Transverse colon (tissue), 4 donors: ENCODE measurements at regions of chr17 and their contacts with region 1.

Region 1: DNA sequence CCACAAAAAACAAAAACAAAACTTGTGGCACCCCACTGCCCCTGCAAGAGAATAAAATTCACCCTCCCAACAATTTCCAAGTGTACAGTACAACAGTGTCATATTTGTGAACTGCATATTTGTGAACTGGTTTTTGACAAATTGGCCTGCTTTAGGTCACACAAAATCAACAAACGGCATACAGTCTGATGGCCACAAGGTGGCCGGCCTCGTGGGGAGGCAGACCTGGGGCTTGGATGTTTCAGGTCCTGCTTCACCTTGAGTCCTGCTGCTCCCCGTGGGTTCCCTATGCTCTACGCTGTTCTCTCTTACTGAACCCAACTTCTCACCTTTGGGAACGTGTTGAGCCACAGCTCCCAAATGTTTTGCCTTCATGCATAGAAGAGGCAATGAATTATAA is 102.2 kb downstream of the CDK5R1 start:
- DNase-seq: no peak
- H3K4me3 ChIP-seq: no peak overlapping the region
- H3K27ac ChIP-seq: no peak overlapping the region
- H3K4me1 ChIP-seq: no peaks in the 10 kb centered on the region
- H3K27me3 ChIP-seq: no peaks in the 10 kb centered on the region
- CTCF ChIP-seq: no peak
- EP300 ChIP-seq: no peak
- POLR2A ChIP-seq: no peak

Region 2: GRCh38 chr17:31147507-31148202 is 1441.3 kb before region 1 on chr17:
- in situ Hi-C with region 1: no loop called
- intact Hi-C with region 1: loop called (anchors 10 kb)
- DNase-seq: no peak
- H3K4me3 ChIP-seq: no peak overlapping the region
- H3K27ac ChIP-seq: no peak overlapping the region
- H3K4me1 ChIP-seq: no peaks in the 10 kb centered on the region
- H3K27me3 ChIP-seq: no peaks in the 10 kb centered on the region
- CTCF ChIP-seq: no peak
- EP300 ChIP-seq: no peak
- POLR2A ChIP-seq: no peak

Region 3: GRCh38 chr17:32664936-32665583 is 76.1 kb after region 1 on chr17:
- in situ Hi-C with region 1: no loop called
- intact Hi-C with region 1: no loop called
- DNase-seq: no peak
- H3K4me3 ChIP-seq: no peak overlapping the region
- H3K27ac ChIP-seq: no peak overlapping the region
- H3K4me1 ChIP-seq: no peaks in the 10 kb centered on the region
- H3K27me3 ChIP-seq: no peaks in the 10 kb centered on the region
- CTCF ChIP-seq: no peak
- EP300 ChIP-seq: no peak
- POLR2A ChIP-seq: no peak